ENCODE measurements at regions of chr6 and their contacts with region 1.

Region 1: DNA sequence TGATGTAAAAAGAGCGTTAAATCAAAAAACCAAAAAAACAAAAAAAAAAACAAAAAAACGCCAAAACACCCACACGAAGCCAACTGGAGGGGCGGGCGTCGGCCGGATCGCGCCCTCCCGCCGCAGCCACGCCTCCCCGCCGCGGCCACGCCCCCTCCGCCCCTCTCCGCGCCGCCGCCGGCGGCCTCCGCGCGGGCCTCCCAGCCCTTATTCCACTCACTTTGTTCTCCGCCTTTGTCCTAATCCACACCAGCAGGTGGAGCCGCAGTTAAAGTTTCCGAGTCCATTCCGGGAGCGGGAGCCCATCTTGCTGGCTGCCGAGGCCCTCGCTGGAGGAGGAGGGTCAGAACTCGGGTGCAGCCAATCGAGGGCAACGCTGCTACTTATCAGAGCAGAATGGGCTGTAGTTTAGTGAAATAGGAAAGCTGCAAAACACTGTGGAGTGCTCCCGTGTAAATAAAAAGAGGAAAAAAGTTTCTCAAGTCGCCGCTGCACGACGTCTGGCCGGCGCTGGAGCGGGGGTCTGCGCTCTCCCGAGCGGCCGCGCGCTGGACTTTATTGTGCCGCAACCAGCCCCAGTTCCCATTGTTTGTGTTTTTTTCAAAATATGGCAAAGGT is at the start of gene ASF1A:
- DNase-seq: peak; percentile 92 to 97
- ATAC-seq: peak; percentile 72 to 87 (median 73)
- H3K4me3 ChIP-seq: peak within 1 kb of the TSS; percentile 91
- H3K4me3 Mint-ChIP-seq: peak within 1 kb of the TSS; percentile 100
- H3K27ac ChIP-seq: peak within 1 kb of the TSS; percentile 88
- H3K27ac Mint-ChIP-seq: peak within 1 kb of the TSS; percentile 97 to 99
- H3K4me1 ChIP-seq: peaks cover 14% of the 10 kb centered on the region
- H3K4me1 Mint-ChIP-seq: peaks cover 54 to 61% of the 10 kb centered on the region in 2 donors
- H3K27me3 ChIP-seq: no peaks in the 10 kb centered on the region
- H3K27me3 Mint-ChIP-seq: no peaks in the 10 kb centered on the region
- CTCF ChIP-seq: no peak
- total RNA-seq, gene ASF1A: 9.2 to 14.5 (median 10.8) TPM

Region 2: DNA sequence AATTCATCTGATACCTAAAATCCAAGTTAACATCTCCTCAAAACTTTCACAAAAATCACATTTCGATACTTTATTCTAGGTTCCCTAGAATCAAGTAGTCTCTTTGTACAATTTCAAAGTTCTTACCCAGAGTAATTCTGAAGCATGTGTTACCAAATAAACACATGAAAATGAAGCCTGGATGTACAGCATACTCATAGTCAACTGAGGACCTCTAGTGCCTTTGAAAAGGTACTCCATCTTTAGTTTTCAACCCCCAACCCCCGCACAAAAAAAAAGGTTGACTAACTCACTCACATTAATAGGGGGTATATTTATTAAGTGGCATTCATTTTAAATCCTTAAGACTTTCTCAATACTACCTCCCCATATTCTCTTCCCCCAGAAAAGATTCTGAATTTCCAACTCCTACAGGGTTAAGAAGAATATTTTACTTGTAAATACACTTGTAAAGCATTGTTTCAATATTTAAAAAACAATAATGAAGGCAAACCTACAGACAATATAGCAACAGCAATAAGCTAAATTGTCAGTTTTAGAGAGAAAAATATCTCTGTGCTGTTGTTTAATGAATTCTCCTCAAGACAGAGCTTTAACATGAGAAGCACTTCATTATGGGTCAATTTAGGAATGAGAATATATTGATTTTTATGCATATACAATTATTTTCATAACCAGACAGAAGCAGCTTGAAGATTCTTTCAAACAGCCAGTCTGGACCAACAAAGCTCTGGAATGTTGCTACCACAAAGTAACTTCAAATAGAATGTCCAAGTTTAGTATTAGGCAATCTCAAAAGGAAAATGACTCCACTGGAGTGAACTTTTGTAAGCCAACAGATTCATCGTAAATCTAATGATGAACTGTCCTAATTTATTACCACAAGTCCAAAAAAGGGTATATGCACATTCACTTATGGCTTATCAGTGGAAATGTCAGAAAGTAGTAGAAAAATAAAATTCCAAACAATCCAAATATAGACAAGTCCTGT is 342.6 kb before region 1 on chr6:
- intact Hi-C with region 1: no loop called
- DNase-seq: peak in 1 of 2 donors; percentile 72
- ATAC-seq: peak; percentile 75 to 94 (median 91)
- H3K4me3 ChIP-seq: no peak overlapping the region
- H3K4me3 Mint-ChIP-seq: no peak overlapping the region
- H3K27ac ChIP-seq: no peak overlapping the region
- H3K27ac Mint-ChIP-seq: peak overlapping the region in 1 of 2 donors; percentile 80
- H3K4me1 ChIP-seq: no peaks in the 10 kb centered on the region
- H3K4me1 Mint-ChIP-seq: peaks cover 19 to 25% of the 10 kb centered on the region in 2 donors
- H3K27me3 ChIP-seq: no peaks in the 10 kb centered on the region
- H3K27me3 Mint-ChIP-seq: no peaks in the 10 kb centered on the region
- CTCF ChIP-seq: peak; percentile 70

Region 3: GRCh38 chr6:118651282-118652050 is 242.4 kb before region 1 on chr6 and contains the start of gene CEP85L:
- intact Hi-C with region 1: loop called (anchors 2 kb)
- DNase-seq: peak; percentile 82 to 95
- ATAC-seq: peak; percentile 88 to 97 (median 89)
- H3K4me3 ChIP-seq: peak within 1 kb of the TSS; percentile 89
- H3K4me3 Mint-ChIP-seq: peak within 1 kb of the TSS; percentile 93
- H3K27ac ChIP-seq: peak within 1 kb of the TSS; percentile 83
- H3K27ac Mint-ChIP-seq: peak within 1 kb of the TSS; percentile 89 to 94
- H3K4me1 ChIP-seq: peaks cover 14% of the 10 kb centered on the region
- H3K4me1 Mint-ChIP-seq: peaks cover 25 to 41% of the 10 kb centered on the region in 2 donors
- H3K27me3 ChIP-seq: no peaks in the 10 kb centered on the region
- H3K27me3 Mint-ChIP-seq: no peaks in the 10 kb centered on the region
- CTCF ChIP-seq: no peak
- total RNA-seq, gene CEP85L: 75.0 to 85.2 (median 82.0) TPM

Region 4: DNA sequence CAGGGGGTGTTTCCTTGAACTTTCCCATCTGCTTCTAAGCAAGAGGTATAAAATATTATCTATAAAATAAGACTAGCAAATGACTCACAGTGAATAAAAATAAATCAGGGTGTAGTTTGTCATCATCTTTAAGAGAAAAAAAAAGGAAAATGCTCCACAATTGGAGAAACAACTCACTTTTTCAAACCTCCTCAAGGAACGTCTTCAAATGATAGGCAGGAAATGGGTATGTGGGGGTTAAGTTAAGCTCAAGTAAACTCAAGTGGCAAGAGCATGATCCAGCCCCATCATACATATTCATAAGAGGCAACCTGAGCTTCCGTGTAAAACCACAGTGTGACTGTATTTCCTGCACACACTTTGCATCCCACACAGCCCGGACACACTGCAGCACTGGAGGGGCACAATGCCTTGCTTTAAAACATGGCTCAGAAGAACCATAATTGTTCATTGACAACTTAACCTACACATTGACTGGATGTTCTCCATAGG is 184.0 kb before region 1 on chr6:
- intact Hi-C with region 1: loop called (anchors 1 kb)
- DNase-seq: peak; percentile 59 to 91
- ATAC-seq: peak; percentile 83 to 92 (median 91)
- H3K4me3 ChIP-seq: peak overlapping the region; percentile 78
- H3K4me3 Mint-ChIP-seq: peak overlapping the region; percentile 100
- H3K27ac ChIP-seq: peak overlapping the region; percentile 80
- H3K27ac Mint-ChIP-seq: peak overlapping the region; percentile 88 to 91
- H3K4me1 ChIP-seq: peaks cover 38% of the 10 kb centered on the region
- H3K4me1 Mint-ChIP-seq: peaks cover 73% of the 10 kb centered on the region in 2 donors
- H3K27me3 ChIP-seq: no peaks in the 10 kb centered on the region
- H3K27me3 Mint-ChIP-seq: no peaks in the 10 kb centered on the region
- CTCF ChIP-seq: no peak

Region 5: DNA sequence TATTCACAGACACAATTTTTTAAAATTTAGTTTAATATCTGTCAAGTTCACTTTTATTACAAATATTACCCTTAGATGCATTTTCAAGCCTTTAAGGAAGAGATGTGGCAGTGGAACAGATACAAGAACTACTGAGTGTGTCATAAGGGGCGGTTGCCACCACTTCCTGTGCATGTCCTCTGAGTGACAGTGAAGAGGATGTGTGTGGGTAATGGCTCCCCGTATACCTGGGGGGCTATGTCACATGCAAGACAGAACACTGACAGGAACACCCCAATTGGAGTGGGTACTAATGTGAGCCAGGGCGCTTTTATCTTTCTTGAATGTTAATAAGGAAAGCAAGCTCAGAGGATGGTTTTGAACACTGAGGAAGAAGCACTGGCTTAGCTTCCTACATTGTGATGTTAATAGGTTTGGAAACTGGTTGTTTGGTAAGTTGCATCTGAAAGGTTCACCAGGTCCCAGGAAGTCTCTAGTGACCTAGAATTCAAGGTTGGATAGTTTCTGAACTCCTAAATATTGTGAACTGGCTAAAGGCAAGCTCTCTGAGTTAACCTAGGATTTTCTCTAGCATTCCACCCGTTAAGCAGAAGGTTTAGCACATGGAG is 83.4 kb before region 1 on chr6:
- intact Hi-C with region 1: loop called (anchors 1 kb)
- DNase-seq: peak; percentile 65 to 84
- ATAC-seq: peak; percentile 83 to 94 (median 86)
- H3K4me3 ChIP-seq: no peak overlapping the region
- H3K4me3 Mint-ChIP-seq: peak overlapping the region; percentile 90
- H3K27ac ChIP-seq: peak overlapping the region; percentile 92
- H3K27ac Mint-ChIP-seq: peak overlapping the region; percentile 96 to 99
- H3K4me1 ChIP-seq: peaks cover 22% of the 10 kb centered on the region
- H3K4me1 Mint-ChIP-seq: peaks cover 54 to 65% of the 10 kb centered on the region in 2 donors
- H3K27me3 ChIP-seq: no peaks in the 10 kb centered on the region
- H3K27me3 Mint-ChIP-seq: no peaks in the 10 kb centered on the region
- CTCF ChIP-seq: no peak

Region 6: DNA sequence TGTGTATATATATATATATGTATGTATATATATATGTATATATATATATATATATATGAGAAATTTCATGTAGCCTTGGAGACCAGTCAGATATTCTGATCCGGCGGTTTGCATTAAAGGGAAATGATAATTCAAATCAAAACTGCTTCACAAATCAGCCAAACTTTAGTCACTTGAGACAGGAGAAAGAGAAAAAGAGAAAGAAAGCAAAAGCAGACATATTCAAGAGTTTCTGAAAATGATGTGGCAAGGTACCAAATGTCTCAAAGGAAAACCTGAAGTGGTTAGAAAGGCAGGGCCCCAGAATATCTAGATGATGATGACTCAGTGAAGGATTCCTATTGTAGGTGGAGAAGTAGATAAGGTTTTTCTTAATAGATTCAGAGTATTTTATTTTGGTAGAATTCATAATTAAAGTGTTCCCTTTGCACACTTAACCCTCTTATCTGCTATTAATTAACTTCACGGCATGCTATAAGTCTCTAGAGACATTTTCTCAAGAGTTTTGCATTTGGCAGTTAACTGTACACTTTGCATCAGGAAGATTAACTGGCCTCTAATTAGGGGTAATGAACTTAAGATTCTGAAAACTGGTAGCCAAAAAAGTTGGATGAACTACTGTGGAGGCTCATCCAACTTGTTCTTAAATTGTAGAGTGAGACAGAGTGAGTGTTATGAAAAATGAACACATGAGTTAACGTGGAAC is 50.1 kb before region 1 on chr6:
- intact Hi-C with region 1: no loop called
- DNase-seq: no peak
- ATAC-seq: no peak
- H3K4me3 ChIP-seq: no peak overlapping the region
- H3K4me3 Mint-ChIP-seq: no peak overlapping the region
- H3K27ac ChIP-seq: no peak overlapping the region
- H3K27ac Mint-ChIP-seq: no peak overlapping the region
- H3K4me1 ChIP-seq: no peaks in the 10 kb centered on the region
- H3K4me1 Mint-ChIP-seq: peaks cover 8 to 31% of the 10 kb centered on the region in 2 donors
- H3K27me3 ChIP-seq: no peaks in the 10 kb centered on the region
- H3K27me3 Mint-ChIP-seq: no peaks in the 10 kb centered on the region
- CTCF ChIP-seq: no peak

Region 7: DNA sequence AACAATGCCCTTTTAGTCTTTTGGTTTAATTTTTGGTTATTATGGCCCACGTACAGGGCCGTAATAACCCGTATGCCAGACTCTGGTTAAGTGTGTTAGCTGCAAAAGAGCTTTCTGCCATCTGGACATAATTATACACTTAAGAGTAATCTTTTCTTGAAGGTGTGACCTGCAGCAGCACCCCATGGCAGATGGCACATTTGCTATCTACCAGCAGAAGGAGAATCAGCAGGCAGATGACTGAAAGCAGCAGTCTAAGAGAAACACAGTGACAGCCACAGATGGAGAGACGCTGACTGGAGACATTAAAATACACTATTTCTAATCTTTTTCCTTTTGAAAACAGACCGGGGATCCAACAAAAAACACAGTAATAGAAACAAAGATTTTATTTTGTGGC is 18.7 kb after region 1 on chr6:
- intact Hi-C with region 1: no loop called
- DNase-seq: no peak
- ATAC-seq: no peak
- H3K4me3 ChIP-seq: no peak overlapping the region
- H3K4me3 Mint-ChIP-seq: no peak overlapping the region
- H3K27ac ChIP-seq: no peak overlapping the region
- H3K27ac Mint-ChIP-seq: no peak overlapping the region
- H3K4me1 ChIP-seq: no peaks in the 10 kb centered on the region
- H3K4me1 Mint-ChIP-seq: no peaks in the 10 kb centered on the region
- H3K27me3 ChIP-seq: no peaks in the 10 kb centered on the region
- H3K27me3 Mint-ChIP-seq: no peaks in the 10 kb centered on the region
- CTCF ChIP-seq: no peak

Region 8: GRCh38 chr6:118934461-118935330 is 40.8 kb after region 1 on chr6 and contains the start of gene MCM9:
- intact Hi-C with region 1: loop called (anchors 1 kb)
- DNase-seq: peak; percentile 83 to 94
- ATAC-seq: peak; percentile 86 to 95 (median 90)
- H3K4me3 ChIP-seq: peak within 1 kb of the TSS; percentile 84
- H3K4me3 Mint-ChIP-seq: peak within 1 kb of the TSS; percentile 97
- H3K27ac ChIP-seq: peak within 1 kb of the TSS; percentile 88
- H3K27ac Mint-ChIP-seq: peak within 1 kb of the TSS; percentile 91 to 95
- H3K4me1 ChIP-seq: no peaks in the 10 kb centered on the region
- H3K4me1 Mint-ChIP-seq: peaks cover 25 to 41% of the 10 kb centered on the region in 2 donors
- H3K27me3 ChIP-seq: no peaks in the 10 kb centered on the region
- H3K27me3 Mint-ChIP-seq: no peaks in the 10 kb centered on the region
- CTCF ChIP-seq: no peak
- total RNA-seq, gene MCM9: 45.2 to 53.4 (median 52.5) TPM

Region 9: DNA sequence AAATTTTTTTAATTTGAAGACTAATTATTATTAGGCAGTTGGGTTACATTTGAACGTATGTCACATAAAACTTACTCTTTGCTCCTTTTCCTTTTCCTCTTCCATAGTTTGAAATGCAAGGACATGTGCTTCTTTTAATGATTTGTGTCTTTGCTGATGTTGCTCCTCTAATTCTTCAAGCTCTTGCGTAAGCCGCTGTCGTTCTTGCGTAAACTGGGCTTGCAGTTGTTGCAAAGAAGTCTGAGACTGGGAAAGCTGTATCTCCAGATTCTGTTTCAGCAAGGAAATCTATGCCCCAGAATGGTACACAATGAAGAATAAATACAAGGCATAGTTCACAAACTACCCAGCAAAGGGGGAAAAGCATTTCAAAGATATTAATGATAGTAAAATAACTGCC is 86.1 kb after region 1 on chr6:
- intact Hi-C with region 1: no loop called
- DNase-seq: no peak
- ATAC-seq: no peak
- H3K4me3 ChIP-seq: no peak overlapping the region
- H3K4me3 Mint-ChIP-seq: no peak overlapping the region
- H3K27ac ChIP-seq: no peak overlapping the region
- H3K27ac Mint-ChIP-seq: no peak overlapping the region
- H3K4me1 ChIP-seq: no peaks in the 10 kb centered on the region
- H3K4me1 Mint-ChIP-seq: no peaks in the 10 kb centered on the region
- H3K27me3 ChIP-seq: no peaks in the 10 kb centered on the region
- H3K27me3 Mint-ChIP-seq: peaks cover 0 to 2% of the 10 kb centered on the region in 2 donors
- CTCF ChIP-seq: no peak

Region 10: GRCh38 chr6:119349323-119350042 is 455.6 kb after region 1 on chr6 and contains the start of gene MAN1A1:
- intact Hi-C with region 1: loop called (anchors 5 kb)
- DNase-seq: peak; percentile 93 to 94
- ATAC-seq: peak; percentile 85 to 96 (median 90)
- H3K4me3 ChIP-seq: peak within 1 kb of the TSS; percentile 80
- H3K4me3 Mint-ChIP-seq: peak within 1 kb of the TSS; percentile 93
- H3K27ac ChIP-seq: peak within 1 kb of the TSS; percentile 91
- H3K27ac Mint-ChIP-seq: peak within 1 kb of the TSS; percentile 88 to 94
- H3K4me1 ChIP-seq: peaks cover 12% of the 10 kb centered on the region
- H3K4me1 Mint-ChIP-seq: peaks cover 46 to 47% of the 10 kb centered on the region in 2 donors
- H3K27me3 ChIP-seq: no peaks in the 10 kb centered on the region
- H3K27me3 Mint-ChIP-seq: no peaks in the 10 kb centered on the region
- CTCF ChIP-seq: no peak
- total RNA-seq, gene MAN1A1: 45.6 to 54.6 (median 53.6) TPM

Measured in natural killer cell (primary cell).